Prostate gland (tissue), 2 donors: ENCODE measurements at regions of chr1 and their contacts with region 1.

Region 1: GRCh38 chr1:1063945-1064831 is 9.9 kb downstream of the RNF223 start:
- DNase-seq: peak; percentile 56
- H3K4me3 ChIP-seq: no peak overlapping the region
- H3K27ac ChIP-seq: no peak overlapping the region
- H3K4me1 ChIP-seq: peaks cover 4% of the 10 kb centered on the region
- H3K27me3 ChIP-seq: peaks cover 7% of the 10 kb centered on the region
- CTCF ChIP-seq: peak; percentile 84 to 96 (median 92)
- POLR2A ChIP-seq: peak; percentile 13

Region 2: DNA sequence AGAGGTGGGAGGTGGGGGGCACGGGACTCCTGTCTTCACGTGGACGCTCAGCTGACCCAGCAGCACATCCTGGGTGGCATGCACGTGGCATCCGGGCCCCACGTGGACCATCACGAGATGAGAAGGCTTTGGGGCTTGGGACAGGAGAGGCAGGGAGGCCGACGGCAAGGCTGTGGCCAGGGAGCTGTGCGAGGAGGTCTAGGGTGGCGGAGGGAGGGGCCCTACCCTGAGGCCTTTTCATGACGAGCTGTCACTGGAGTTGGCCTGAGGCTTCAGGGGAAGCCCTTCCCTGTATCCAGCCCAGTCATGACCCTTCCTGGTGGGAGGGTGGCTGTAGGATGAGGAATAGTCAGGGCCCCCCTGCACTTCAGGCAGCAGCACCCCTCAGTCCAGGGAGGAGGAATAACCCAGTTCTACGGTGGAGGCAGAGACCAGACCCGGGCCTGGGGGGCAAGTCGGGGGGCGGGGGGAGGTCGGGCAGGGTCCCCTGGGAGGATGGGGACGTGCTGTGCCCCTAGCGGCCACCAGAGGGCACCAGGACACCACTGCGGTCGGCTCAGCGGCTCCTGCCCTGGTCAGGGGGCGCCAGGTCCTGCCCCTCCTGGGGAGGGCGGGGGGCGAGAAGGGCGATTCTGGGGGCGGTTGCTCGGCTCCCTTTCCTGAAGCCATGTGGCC is 80.3 kb before region 1 on chr1:
- intact Hi-C with region 1: loop called (anchors 1 kb)
- DNase-seq: no peak
- H3K4me3 ChIP-seq: no peak overlapping the region
- H3K27ac ChIP-seq: no peak overlapping the region
- H3K4me1 ChIP-seq: no peaks in the 10 kb centered on the region
- H3K27me3 ChIP-seq: peaks cover 1% of the 10 kb centered on the region
- CTCF ChIP-seq: peak; percentile 61 to 82 (median 71)
- POLR2A ChIP-seq: no peak